ENCODE measurements at regions of chr4 and their contacts with region 1.

Region 1: GRCh38 chr4:26330186-26330787 is 9.5 kb downstream of the RBPJ start:
- DNase-seq: peak in 4 of 5 donors; percentile 53 to 61 (median 56)
- H3K4me3 ChIP-seq: no peak overlapping the region
- H3K4me3 Mint-ChIP-seq: peak overlapping the region in 4 of 8 donors; percentile 8 to 48 (median 38)
- H3K27ac ChIP-seq: no peak overlapping the region
- H3K27ac Mint-ChIP-seq: peak overlapping the region in 2 of 7 donors; percentile 44 to 78
- H3K4me1 ChIP-seq: peaks cover 24% of the 10 kb centered on the region
- H3K4me1 Mint-ChIP-seq: peaks cover 37 to 46% (median 42%) of the 10 kb centered on the region in 4 donors
- H3K27me3 ChIP-seq: no peaks in the 10 kb centered on the region
- H3K27me3 Mint-ChIP-seq: no peaks in the 10 kb centered on the region

Region 2: GRCh38 chr4:25993395-25994185 is 336.7 kb before region 1 on chr4:
- CTCF ChIA-PET with region 1: interaction called, 85 read pairs
- POLR2A ChIA-PET with region 1: no interaction called
- intact Hi-C with region 1: loop called (anchors 1 kb)
- DNase-seq: no peak
- H3K4me3 ChIP-seq: no peak overlapping the region
- H3K4me3 Mint-ChIP-seq: no peak overlapping the region
- H3K27ac ChIP-seq: no peak overlapping the region
- H3K27ac Mint-ChIP-seq: no peak overlapping the region
- H3K4me1 ChIP-seq: no peaks in the 10 kb centered on the region
- H3K4me1 Mint-ChIP-seq: peaks cover 1 to 8% (median 3%) of the 10 kb centered on the region in 4 donors
- H3K27me3 ChIP-seq: no peaks in the 10 kb centered on the region
- H3K27me3 Mint-ChIP-seq: no peaks in the 10 kb centered on the region

Region 3: GRCh38 chr4:26081795-26082498 is 248.3 kb before region 1 on chr4:
- CTCF ChIA-PET with region 1: interaction called, 223 read pairs
- POLR2A ChIA-PET with region 1: interaction called, 6 read pairs
- intact Hi-C with region 1: loop called (anchors 1 kb)
- DNase-seq: peak in 4 of 5 donors; percentile 40 to 55 (median 44)
- H3K4me3 ChIP-seq: no peak overlapping the region
- H3K4me3 Mint-ChIP-seq: peak overlapping the region in 2 of 8 donors; percentile 40 to 47
- H3K27ac ChIP-seq: no peak overlapping the region
- H3K27ac Mint-ChIP-seq: peak overlapping the region in 5 of 7 donors; percentile 4 to 62 (median 31)
- H3K4me1 ChIP-seq: peaks cover 9% of the 10 kb centered on the region
- H3K4me1 Mint-ChIP-seq: peaks cover 9 to 18% (median 15%) of the 10 kb centered on the region in 4 donors
- H3K27me3 ChIP-seq: no peaks in the 10 kb centered on the region
- H3K27me3 Mint-ChIP-seq: no peaks in the 10 kb centered on the region

Region 4: GRCh38 chr4:26342328-26343037 is 12.2 kb after region 1 on chr4:
- CTCF ChIA-PET with region 1: interaction called, 117 read pairs
- POLR2A ChIA-PET with region 1: interaction called, 3 read pairs
- intact Hi-C with region 1: no loop called
- DNase-seq: no peak
- H3K4me3 ChIP-seq: no peak overlapping the region
- H3K4me3 Mint-ChIP-seq: peak overlapping the region in 4 of 8 donors; percentile 6 to 40 (median 9)
- H3K27ac ChIP-seq: no peak overlapping the region
- H3K27ac Mint-ChIP-seq: peak overlapping the region in 3 of 7 donors; percentile 24 to 65 (median 32)
- H3K4me1 ChIP-seq: peaks cover 39% of the 10 kb centered on the region
- H3K4me1 Mint-ChIP-seq: peaks cover 44 to 65% (median 54%) of the 10 kb centered on the region in 4 donors
- H3K27me3 ChIP-seq: no peaks in the 10 kb centered on the region
- H3K27me3 Mint-ChIP-seq: no peaks in the 10 kb centered on the region

Region 5: GRCh38 chr4:26402458-26402857 is 72.2 kb after region 1 on chr4:
- CTCF ChIA-PET with region 1: interaction called, 300 read pairs
- POLR2A ChIA-PET with region 1: no interaction called
- intact Hi-C with region 1: no loop called
- DNase-seq: no peak
- H3K4me3 ChIP-seq: no peak overlapping the region
- H3K4me3 Mint-ChIP-seq: no peak overlapping the region
- H3K27ac ChIP-seq: no peak overlapping the region
- H3K27ac Mint-ChIP-seq: peak overlapping the region in 4 of 7 donors; percentile 2 to 54 (median 23)
- H3K4me1 ChIP-seq: peaks cover 11% of the 10 kb centered on the region
- H3K4me1 Mint-ChIP-seq: peaks cover 14 to 29% (median 19%) of the 10 kb centered on the region in 4 donors
- H3K27me3 ChIP-seq: no peaks in the 10 kb centered on the region
- H3K27me3 Mint-ChIP-seq: no peaks in the 10 kb centered on the region